PC-3 (cell line): ENCODE measurements at regions of chr13 and their contacts with region 1.

Region 1: GRCh38 chr13:99955099-99955746 is 16.3 kb downstream of the ZIC5 start:
- DNase-seq: no peak
- ATAC-seq: no peak
- H3K4me3 ChIP-seq: no peak overlapping the region
- H3K27ac ChIP-seq: no peak overlapping the region
- H3K4me1 ChIP-seq: no peaks in the 10 kb centered on the region
- H3K27me3 ChIP-seq: peaks cover 78% of the 10 kb centered on the region
- CTCF ChIP-seq: no peak

Region 2: GRCh38 chr13:99812625-99813024 is 142.6 kb before region 1 on chr13:
- CTCF ChIA-PET with region 1: no interaction called
- POLR2A ChIA-PET with region 1: interaction called, 17 read pairs
- intact Hi-C with region 1: no loop called
- DNase-seq: peak; percentile 35
- ATAC-seq: peak; percentile 70
- H3K4me3 ChIP-seq: no peak overlapping the region
- H3K27ac ChIP-seq: no peak overlapping the region
- H3K4me1 ChIP-seq: no peaks in the 10 kb centered on the region
- H3K27me3 ChIP-seq: no peaks in the 10 kb centered on the region
- CTCF ChIP-seq: no peak